GM12878 (cell line): ENCODE measurements at regions of chr12 and their contacts with region 1.

Region 1: GRCh38 chr12:48851883-48852733 is at the start of gene DDX23:
- DNase-seq: peak; percentile 77
- ATAC-seq: peak; percentile 98
- H3K4me3 ChIP-seq: peak within 1 kb of the TSS; percentile 89
- H3K27ac ChIP-seq: peak within 1 kb of the TSS; percentile 90
- H3K4me1 ChIP-seq: peaks cover 10% of the 10 kb centered on the region; the same call in 1 of the 2 replicates
- H3K27me3 ChIP-seq: no peaks in the 10 kb centered on the region
- CTCF ChIP-seq: no peak
- EP300 ChIP-seq: no peak
- POLR2A ChIP-seq: peak; percentile 96
- RAD21 ChIP-seq: no peak
- polyA plus RNA-seq, gene DDX23: 25.8 to 36.3 TPM

Region 2: GRCh38 chr12:48279101-48279500 is 573.0 kb before region 1 on chr12:
- CTCF ChIA-PET with region 1: no interaction called
- POLR2A ChIA-PET with region 1: no interaction called
- RAD21 ChIA-PET with region 1: no interaction called
- SMC1A ChIA-PET with region 1: no interaction called
- in situ Hi-C with region 1: no loop called
- intact Hi-C with region 1: no loop called
- DNase-seq: no peak
- ATAC-seq: no peak
- H3K4me3 ChIP-seq: no peak overlapping the region
- H3K27ac ChIP-seq: no peak overlapping the region
- H3K4me1 ChIP-seq: no peaks in the 10 kb centered on the region
- H3K27me3 ChIP-seq: no peaks in the 10 kb centered on the region
- CTCF ChIP-seq: no peak
- EP300 ChIP-seq: no peak
- POLR2A ChIP-seq: no peak
- RAD21 ChIP-seq: no peak

Region 3: DNA sequence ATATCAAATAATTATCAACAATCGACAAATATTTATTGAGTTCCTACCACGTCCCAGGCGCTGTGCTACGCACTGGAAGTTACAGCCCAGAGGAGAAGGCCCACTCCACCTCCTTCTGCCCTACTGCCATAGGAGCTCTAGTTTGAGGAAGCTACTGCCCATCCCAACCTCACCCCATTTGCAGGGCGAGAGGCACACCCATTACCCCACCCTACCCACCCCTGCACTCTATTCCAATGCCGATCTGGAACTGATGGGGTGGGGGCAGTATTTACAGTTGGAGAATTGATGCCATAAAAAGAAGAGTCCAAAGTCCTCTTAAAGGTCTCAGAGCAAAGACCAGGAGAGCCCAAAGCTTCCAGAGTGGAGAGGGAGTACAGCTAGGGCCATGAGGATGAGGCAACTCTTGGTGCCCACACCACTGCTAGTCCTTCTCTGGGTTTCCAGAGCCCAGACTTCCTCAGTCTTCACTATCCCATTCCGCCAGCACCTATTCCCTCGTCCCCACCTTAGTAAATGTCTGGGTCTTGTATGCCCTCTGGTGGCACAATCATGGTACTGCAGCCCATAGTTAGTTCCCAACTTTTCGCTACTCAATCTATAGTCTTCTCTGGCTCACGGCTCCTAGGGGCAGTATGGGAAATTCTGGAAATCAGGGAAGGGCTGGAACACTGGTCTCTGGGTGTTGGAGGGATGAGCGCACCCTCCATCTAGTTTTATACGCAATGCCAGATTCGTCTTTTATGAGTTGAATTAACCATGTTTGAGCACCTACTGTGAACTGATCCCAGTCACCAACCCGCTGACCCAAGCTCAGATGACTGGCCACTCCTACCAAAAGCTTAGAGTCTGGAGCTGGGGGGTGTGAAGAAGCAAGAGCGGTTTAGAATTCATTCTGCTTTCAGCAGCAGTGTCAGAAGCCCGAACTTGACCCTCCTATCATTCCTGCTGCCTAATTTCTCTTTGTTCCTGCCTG is 56.3 kb before region 1 on chr12:
- CTCF ChIA-PET with region 1: interaction called, 10 read pairs
- POLR2A ChIA-PET with region 1: no interaction called
- RAD21 ChIA-PET with region 1: interaction called, 5 read pairs
- SMC1A ChIA-PET with region 1: no interaction called
- in situ Hi-C with region 1: no loop called
- intact Hi-C with region 1: no loop called
- DNase-seq: peak; percentile 16
- ATAC-seq: peak; percentile 88
- H3K4me3 ChIP-seq: no peak overlapping the region
- H3K27ac ChIP-seq: no peak overlapping the region
- H3K4me1 ChIP-seq: no peaks in the 10 kb centered on the region
- H3K27me3 ChIP-seq: no peaks in the 10 kb centered on the region; a peak in 1 of 4 replicates
- CTCF ChIP-seq: peak; percentile 93 to 95 (median 95)
- EP300 ChIP-seq: no peak
- POLR2A ChIP-seq: no peak
- RAD21 ChIP-seq: peak; percentile 97

Region 4: DNA sequence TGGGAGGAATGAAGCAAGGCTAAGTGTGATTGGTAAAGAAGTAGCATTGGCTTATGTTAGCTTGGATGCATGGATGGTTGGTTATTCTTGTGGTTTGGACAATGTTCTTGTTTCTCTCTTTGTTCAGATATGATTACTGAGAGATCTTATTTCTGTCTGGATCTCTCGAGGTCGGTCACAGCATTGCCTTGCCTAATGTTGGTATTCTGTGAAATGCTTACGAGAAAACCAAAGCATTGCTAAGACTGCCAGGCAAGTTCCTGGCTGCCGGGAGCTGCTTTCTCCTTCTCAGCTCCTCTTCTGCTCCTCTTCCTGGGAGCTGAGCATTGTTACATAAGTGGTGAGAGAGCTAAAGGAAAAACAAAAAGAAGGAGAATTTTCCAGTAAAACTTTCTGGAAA is 21.0 kb after region 1 on chr12:
- CTCF ChIA-PET with region 1: interaction called, 135 read pairs
- POLR2A ChIA-PET with region 1: interaction called, 6 read pairs
- RAD21 ChIA-PET with region 1: interaction called, 7 read pairs
- SMC1A ChIA-PET with region 1: interaction called, 79 read pairs
- in situ Hi-C with region 1: no loop called
- intact Hi-C with region 1: no loop called
- DNase-seq: no peak
- ATAC-seq: no peak
- H3K4me3 ChIP-seq: no peak overlapping the region
- H3K27ac ChIP-seq: no peak overlapping the region
- H3K4me1 ChIP-seq: no peaks in the 10 kb centered on the region
- H3K27me3 ChIP-seq: no peaks in the 10 kb centered on the region
- CTCF ChIP-seq: no peak
- EP300 ChIP-seq: no peak
- POLR2A ChIP-seq: no peak
- RAD21 ChIP-seq: no peak

Region 5: GRCh38 chr12:48903982-48904411 is 51.9 kb after region 1 on chr12:
- CTCF ChIA-PET with region 1: interaction called, 112 read pairs
- POLR2A ChIA-PET with region 1: interaction called, 13 read pairs
- RAD21 ChIA-PET with region 1: interaction called, 49 read pairs
- SMC1A ChIA-PET with region 1: interaction called, 44 read pairs
- in situ Hi-C with region 1: no loop called
- intact Hi-C with region 1: loop called (anchors 2 kb)
- DNase-seq: peak; percentile 20
- ATAC-seq: peak; percentile 97
- H3K4me3 ChIP-seq: peak overlapping the region; percentile 40; the same call in 1 of the 2 replicates
- H3K27ac ChIP-seq: no peak overlapping the region
- H3K4me1 ChIP-seq: peaks cover 8% of the 10 kb centered on the region; the same call in 1 of the 2 replicates
- H3K27me3 ChIP-seq: no peaks in the 10 kb centered on the region; a peak in 1 of 4 replicates
- CTCF ChIP-seq: peak; percentile 66 to 81 (median 75)
- EP300 ChIP-seq: no peak
- POLR2A ChIP-seq: no peak
- RAD21 ChIP-seq: peak; percentile 41

Region 6: DNA sequence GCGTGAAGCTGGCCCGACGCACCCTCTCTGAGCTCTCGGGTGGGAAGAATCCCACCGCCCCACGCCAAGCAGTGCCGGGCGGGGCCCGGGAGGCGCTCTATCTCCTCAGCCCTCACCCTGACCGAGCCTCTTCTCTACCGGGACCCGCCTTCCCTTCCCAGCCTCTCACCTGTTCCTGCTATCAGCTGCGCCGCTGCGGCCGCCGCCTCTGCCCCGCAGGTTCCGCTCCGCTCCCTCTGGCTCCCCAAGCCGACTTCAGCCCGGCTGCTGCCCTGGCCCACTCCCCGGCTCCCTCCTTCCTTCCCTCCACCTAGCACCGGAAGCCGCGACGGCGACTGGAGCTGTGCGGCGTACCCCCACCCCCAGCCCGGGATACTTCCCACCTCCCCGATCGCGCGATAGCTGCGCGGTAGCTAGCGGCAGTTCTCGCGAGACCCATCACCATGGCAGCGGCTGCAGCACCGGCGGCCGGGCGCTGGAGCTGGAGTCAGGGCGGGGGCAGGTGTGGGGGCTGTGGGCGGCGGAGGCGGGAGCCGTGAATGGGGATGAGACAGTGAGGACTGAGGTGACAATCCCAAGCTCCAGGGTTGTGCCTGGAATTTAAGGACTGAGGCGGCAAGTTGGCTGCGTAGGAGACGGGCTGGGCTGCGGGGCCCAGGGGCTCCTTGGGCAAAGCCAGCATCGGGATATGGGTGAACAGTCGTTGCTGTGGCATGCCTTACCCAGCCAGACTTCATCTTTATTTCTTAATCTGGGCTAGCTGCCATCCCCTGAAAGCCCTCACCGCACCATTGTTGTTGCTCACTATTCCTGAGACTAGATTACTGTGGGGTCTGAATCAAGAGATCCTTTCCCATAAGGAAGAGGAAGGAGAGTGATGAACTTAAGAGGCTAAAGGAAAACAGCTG is 105.3 kb after region 1 on chr12 and contains the start of gene ARF3:
- CTCF ChIA-PET with region 1: interaction called, 12 read pairs
- POLR2A ChIA-PET with region 1: interaction called, 5 read pairs
- RAD21 ChIA-PET with region 1: interaction called, 17 read pairs
- SMC1A ChIA-PET with region 1: interaction called, 6 read pairs
- in situ Hi-C with region 1: no loop called
- intact Hi-C with region 1: no loop called
- DNase-seq: peak; percentile 80
- ATAC-seq: peak; percentile 93
- H3K4me3 ChIP-seq: peak within 1 kb of the TSS; percentile 95
- H3K27ac ChIP-seq: peak within 1 kb of the TSS; percentile 62
- H3K4me1 ChIP-seq: peaks cover 14% of the 10 kb centered on the region
- H3K27me3 ChIP-seq: no peaks in the 10 kb centered on the region; a peak in 1 of 4 replicates
- CTCF ChIP-seq: 0 out of 6 replicates have a peak, but pooled peaks of 1 of the 3 experiments have one; percentile 8
- EP300 ChIP-seq: no peak
- POLR2A ChIP-seq: peak; percentile 83
- RAD21 ChIP-seq: no peak
- polyA plus RNA-seq, gene ARF3: 8.7 to 13.2 TPM

Region 7: GRCh38 chr12:48995061-48995879 is 143.2 kb after region 1 on chr12:
- CTCF ChIA-PET with region 1: interaction called, 28 read pairs
- POLR2A ChIA-PET with region 1: interaction called, 12 read pairs
- RAD21 ChIA-PET with region 1: interaction called, 43 read pairs
- SMC1A ChIA-PET with region 1: interaction called, 14 read pairs
- in situ Hi-C with region 1: no loop called
- intact Hi-C with region 1: loop called (anchors 1 kb)
- DNase-seq: no peak
- ATAC-seq: peak; percentile 31
- H3K4me3 ChIP-seq: no peak overlapping the region
- H3K27ac ChIP-seq: no peak overlapping the region
- H3K4me1 ChIP-seq: peaks cover 29% of the 10 kb centered on the region
- H3K27me3 ChIP-seq: no peaks in the 10 kb centered on the region; a peak in 1 of 4 replicates
- CTCF ChIP-seq: peak; percentile 68 to 84 (median 82)
- EP300 ChIP-seq: no peak
- POLR2A ChIP-seq: no peak
- RAD21 ChIP-seq: peak; percentile 62

Region 8: DNA sequence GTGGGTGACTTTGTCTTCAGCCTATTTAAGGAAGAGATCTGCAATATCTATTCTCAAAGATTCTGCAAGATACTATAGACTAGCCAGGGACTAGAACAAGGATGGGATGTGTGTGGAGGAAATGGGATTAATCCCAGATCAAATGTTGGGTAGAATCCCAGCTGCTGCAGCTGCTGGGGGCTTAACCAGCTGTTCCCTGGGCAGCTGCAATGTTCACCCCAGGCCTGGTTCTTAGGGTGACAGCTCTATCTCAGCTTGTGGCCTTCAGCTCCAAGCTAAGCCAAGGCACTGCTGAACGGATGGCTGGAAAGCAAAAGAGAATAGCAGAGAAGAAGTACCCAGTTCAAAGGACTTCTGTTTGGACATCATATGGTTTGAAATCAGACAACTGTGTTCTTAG is 227.7 kb after region 1 on chr12:
- CTCF ChIA-PET with region 1: no interaction called
- POLR2A ChIA-PET with region 1: no interaction called
- RAD21 ChIA-PET with region 1: no interaction called
- SMC1A ChIA-PET with region 1: no interaction called
- in situ Hi-C with region 1: no loop called
- intact Hi-C with region 1: no loop called
- DNase-seq: no peak
- ATAC-seq: no peak
- H3K4me3 ChIP-seq: no peak overlapping the region
- H3K27ac ChIP-seq: no peak overlapping the region
- H3K4me1 ChIP-seq: no peaks in the 10 kb centered on the region
- H3K27me3 ChIP-seq: no peaks in the 10 kb centered on the region; a peak in 1 of 4 replicates
- CTCF ChIP-seq: no peak
- EP300 ChIP-seq: no peak
- POLR2A ChIP-seq: no peak
- RAD21 ChIP-seq: no peak

Region 9: DNA sequence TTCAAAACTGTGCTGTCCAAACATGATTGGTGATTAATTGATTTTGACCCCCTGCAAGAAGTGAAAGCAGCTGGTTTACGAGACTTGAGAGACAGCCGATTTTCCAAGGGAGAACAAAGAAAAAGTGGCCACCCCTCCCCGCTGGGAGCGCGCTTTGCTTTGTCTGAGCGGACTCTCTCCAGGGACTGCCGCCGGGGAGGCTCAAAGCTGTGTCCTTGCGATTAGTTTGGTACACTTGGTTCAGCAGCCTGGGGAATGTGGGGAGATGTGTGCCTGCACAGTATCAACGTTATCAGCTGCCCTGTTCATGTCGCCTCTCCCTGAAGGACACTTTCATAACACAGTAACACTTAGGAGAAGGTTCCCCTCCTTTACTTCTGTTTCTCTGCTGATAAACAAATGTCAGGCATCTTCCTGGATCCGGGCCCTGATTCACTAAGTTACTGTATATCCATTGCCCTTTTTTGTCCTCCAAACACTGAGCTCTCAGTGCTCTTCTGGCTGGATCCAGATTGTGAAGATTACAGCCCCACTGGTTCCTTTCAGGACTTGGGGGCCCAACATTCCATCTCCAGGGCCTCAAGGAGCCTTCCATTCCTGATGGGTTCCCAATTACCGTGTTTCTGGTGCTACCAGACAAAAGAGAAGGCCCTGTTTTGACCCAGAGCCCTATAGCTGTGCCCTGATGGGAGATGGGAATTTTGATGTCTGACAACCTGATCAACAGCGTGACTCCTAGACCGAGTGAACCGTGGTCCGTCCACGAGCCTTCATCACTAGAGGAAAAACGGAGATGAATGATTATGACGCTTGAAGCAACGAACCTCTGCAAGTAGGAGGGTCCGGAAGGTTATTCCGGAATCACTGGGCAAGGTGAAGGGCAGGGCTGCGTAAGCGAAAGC is 381.1 kb after region 1 on chr12:
- CTCF ChIA-PET with region 1: no interaction called
- POLR2A ChIA-PET with region 1: no interaction called
- RAD21 ChIA-PET with region 1: no interaction called
- SMC1A ChIA-PET with region 1: no interaction called
- in situ Hi-C with region 1: no loop called
- intact Hi-C with region 1: no loop called
- DNase-seq: no peak
- ATAC-seq: no peak
- H3K4me3 ChIP-seq: peak overlapping the region; percentile 4; the same call in 1 of the 2 replicates
- H3K27ac ChIP-seq: no peak overlapping the region
- H3K4me1 ChIP-seq: peaks cover 3% of the 10 kb centered on the region; the same call in 1 of the 2 replicates
- H3K27me3 ChIP-seq: no peaks in the 10 kb centered on the region
- CTCF ChIP-seq: no peak
- EP300 ChIP-seq: no peak
- POLR2A ChIP-seq: no peak
- RAD21 ChIP-seq: no peak

Region 10: DNA sequence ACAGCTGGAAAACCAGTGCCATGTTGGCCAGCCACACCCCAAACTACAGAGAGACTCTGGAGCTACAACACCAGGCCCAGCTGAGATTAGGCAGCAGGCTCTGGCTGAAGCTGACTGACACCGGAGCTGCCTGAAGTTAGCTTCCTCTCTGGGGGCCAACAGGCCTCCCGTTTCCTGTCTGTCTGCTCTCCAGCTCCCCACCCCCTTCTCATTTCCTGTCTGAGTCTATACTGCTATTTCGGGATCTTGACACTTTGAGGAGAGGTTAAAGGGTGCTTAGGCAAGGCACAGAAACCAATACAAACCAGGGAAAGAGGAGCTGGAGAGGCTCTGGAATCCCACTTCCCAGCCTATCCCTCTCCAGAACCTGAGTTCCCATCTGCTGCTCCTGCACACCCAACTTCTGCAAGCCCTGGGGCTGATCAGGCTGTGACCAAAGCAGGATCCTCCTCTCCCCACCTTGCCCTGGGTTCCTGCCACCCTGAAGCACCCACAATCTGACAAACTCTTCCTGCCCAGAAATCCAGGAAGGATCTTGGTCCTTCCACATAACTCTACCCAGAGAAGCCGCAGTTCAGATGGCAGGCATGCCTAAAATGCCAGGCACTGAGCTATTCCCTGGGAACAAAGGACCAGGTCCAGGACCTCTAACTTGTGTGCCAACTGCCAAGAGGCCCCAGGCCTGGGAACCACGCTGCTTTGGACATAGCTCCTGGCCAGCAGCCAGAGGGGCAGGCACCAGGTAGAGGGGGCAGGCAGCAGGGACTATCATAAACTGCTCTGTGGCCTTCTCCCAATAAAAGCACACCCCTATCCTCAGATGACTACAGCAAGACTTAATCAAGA is 811.1 kb after region 1 on chr12:
- CTCF ChIA-PET with region 1: no interaction called
- POLR2A ChIA-PET with region 1: no interaction called
- RAD21 ChIA-PET with region 1: no interaction called
- SMC1A ChIA-PET with region 1: no interaction called
- in situ Hi-C with region 1: no loop called
- intact Hi-C with region 1: no loop called
- DNase-seq: peak; percentile 75
- ATAC-seq: peak; percentile 91
- H3K4me3 ChIP-seq: peak overlapping the region; percentile 39; the same call in 1 of the 2 replicates
- H3K27ac ChIP-seq: peak overlapping the region; percentile 86
- H3K4me1 ChIP-seq: peaks cover 58% of the 10 kb centered on the region
- H3K27me3 ChIP-seq: no peaks in the 10 kb centered on the region
- CTCF ChIP-seq: no peak
- EP300 ChIP-seq: peak; percentile 11 to 36; a peak in 2 of 4 replicates
- POLR2A ChIP-seq: peak; percentile 88
- RAD21 ChIP-seq: peak; percentile 23; the same call in 1 of the 2 replicates